ENCODE measurements at regions of chr4 and their contacts with region 1.

Region 1: DNA sequence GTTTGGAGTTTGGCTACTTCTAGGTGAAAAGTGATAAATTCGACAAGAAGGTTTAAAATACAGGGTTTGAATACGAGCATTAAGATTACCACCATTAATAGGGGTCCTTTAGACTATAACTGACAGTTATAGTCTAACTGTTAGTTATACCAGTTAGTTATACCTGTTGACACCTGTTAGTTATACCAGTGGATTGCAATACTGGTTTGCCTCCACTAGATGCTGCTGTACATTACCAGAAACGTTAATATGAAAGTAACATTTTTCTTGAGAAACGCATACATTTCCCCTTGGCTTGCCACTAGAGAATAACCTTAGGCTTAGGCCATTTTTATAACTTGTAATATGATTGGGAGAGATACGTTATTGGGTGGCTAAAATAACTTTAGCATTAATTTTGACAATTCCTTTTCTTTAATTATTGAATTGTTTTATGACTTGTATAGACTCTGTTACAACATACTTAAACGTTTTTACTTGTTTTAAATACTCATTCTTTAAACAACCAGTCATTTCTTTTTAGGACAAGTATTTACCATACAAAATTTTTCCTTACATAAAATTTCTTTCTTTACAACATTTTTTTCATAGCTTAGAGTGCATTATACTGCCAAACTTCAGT is 911.2 kb downstream of the FSTL5 start:
- DNase-seq: no peak
- H3K4me3 ChIP-seq: no peak overlapping the region
- H3K27ac ChIP-seq: no peak overlapping the region
- H3K4me1 ChIP-seq: no peaks in the 10 kb centered on the region
- H3K27me3 ChIP-seq: no peaks in the 10 kb centered on the region
- CTCF ChIP-seq: peak; percentile 81

Region 2: GRCh38 chr4:159946983-159947615 is 1305.5 kb before region 1 on chr4:
- CTCF ChIA-PET with region 1: no interaction called
- POLR2A ChIA-PET with region 1: no interaction called
- intact Hi-C with region 1: loop called (anchors 10 kb)
- DNase-seq: peak in 1 of 2 experiments; percentile 35
- H3K4me3 ChIP-seq: no peak overlapping the region
- H3K27ac ChIP-seq: no peak overlapping the region
- H3K4me1 ChIP-seq: no peaks in the 10 kb centered on the region
- H3K27me3 ChIP-seq: no peaks in the 10 kb centered on the region
- CTCF ChIP-seq: peak; percentile 77

Region 3: DNA sequence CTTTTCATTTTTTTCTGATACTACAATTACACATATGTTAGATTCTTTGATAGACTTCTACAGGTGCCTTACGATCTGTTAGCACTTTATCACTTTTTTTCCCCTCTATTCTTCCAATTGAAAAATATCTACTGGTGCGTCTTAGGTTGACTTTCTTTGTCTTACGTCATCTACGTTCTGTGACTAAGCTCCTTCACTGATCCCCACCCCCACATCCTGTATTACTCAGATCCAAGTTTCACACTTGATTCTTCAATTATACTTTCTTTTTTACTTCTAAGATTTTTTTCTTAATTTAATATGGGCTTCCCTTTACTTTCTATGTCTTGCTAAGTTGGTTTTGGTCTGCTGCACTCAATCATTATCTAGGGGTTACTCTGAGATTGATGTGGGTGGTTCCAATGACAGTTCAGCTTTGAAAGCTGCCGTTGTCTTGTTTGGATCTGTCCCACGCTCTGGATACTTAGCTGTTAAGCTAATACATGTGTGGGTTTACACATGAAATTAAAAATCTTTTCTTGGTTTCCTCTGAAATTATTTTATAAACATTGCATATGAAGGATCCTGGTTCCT is 828.7 kb before region 1 on chr4:
- CTCF ChIA-PET with region 1: no interaction called
- POLR2A ChIA-PET with region 1: no interaction called
- intact Hi-C with region 1: no loop called
- DNase-seq: no peak
- H3K4me3 ChIP-seq: no peak overlapping the region
- H3K27ac ChIP-seq: no peak overlapping the region
- H3K4me1 ChIP-seq: no peaks in the 10 kb centered on the region
- H3K27me3 ChIP-seq: no peaks in the 10 kb centered on the region
- CTCF ChIP-seq: no peak

Region 4: GRCh38 chr4:161680146-161680545 is 427.5 kb after region 1 on chr4:
- CTCF ChIA-PET with region 1: no interaction called
- POLR2A ChIA-PET with region 1: no interaction called
- intact Hi-C with region 1: no loop called
- DNase-seq: no peak
- H3K4me3 ChIP-seq: no peak overlapping the region
- H3K27ac ChIP-seq: no peak overlapping the region
- H3K4me1 ChIP-seq: no peaks in the 10 kb centered on the region
- H3K27me3 ChIP-seq: no peaks in the 10 kb centered on the region
- CTCF ChIP-seq: no peak

Region 5: DNA sequence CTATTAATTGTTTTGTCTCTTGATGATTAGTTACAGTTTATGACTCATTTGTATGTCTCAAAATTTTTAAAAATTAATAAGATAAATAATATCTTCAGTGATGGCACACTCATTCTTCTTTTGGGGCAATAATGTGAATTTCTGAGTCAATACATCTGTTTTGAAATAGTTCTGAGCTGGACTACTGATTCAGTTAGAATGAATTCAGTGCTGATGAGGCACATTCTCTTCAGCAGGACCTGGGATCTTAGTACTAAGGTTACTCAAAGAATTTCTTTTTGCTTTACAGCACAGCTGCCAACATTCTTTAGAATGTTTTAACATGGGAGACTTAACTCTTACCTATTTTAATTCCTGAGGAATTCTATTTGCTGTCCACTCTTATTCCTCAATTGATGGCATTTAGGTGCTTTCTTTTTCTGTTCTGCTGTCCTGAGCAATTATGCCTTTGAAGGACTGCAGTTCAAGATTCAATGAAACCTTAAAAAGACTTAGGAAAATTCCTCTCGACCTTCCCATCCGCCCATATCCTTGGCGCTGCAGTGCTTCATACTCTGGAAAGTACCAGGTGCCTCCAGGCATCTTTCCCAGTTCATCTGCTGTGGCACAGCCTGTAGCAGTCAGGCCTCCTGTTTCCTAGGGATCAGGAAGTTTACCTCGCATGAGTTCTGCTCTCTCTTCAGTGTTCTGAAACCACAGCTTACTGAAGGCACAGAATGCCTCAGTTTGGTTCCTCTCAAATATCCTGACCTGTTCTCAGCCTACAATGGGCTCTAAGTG is 697.5 kb after region 1 on chr4:
- CTCF ChIA-PET with region 1: no interaction called
- POLR2A ChIA-PET with region 1: no interaction called
- intact Hi-C with region 1: loop called (anchors 10 kb)
- DNase-seq: no peak
- H3K4me3 ChIP-seq: no peak overlapping the region
- H3K27ac ChIP-seq: no peak overlapping the region
- H3K4me1 ChIP-seq: no peaks in the 10 kb centered on the region
- H3K27me3 ChIP-seq: no peaks in the 10 kb centered on the region
- CTCF ChIP-seq: no peak

Region 6: DNA sequence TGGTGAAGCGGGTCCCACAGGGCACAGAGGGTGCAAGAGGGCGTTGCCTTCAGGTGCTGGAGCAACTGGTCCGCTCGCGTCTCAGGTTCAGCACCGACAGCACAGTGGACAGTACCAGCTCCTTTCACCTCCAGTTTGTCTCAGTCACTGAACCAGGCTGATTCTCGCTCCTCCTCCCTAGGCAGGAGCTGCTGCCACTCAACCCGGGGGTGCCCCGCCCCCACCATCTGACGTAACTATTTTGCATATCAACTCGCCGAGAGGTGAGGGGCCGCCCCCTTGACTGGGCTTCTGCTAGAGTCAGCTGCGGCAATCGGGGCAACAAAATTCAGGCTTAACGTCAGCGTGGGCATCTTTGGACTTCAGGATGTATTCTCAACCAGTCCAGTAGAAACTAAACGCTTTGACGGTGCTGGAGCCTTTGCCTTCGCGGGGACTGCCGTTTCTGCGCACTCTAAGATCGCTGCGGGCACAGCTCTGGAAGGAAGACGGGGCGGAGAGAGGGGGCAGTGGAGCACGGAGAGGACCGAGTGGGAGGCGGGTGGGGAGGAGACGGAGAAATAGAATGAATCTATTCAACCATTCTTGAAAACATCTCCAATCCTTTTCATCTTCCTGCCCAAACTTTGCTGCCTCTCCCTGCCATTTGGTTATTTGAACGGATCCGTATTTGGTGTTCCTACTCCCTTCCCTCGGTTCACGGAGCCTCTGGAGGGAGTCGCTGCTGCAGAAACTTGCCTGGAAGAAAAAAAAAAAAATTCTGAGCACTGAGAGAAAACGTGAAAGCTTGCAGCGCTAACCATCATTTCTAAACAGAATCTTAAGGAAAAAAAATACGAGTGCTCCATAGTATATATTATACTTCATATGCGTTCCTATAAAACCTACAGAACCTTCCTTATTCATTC is 911.5 kb after region 1 on chr4 and contains the start of gene FSTL5:
- CTCF ChIA-PET with region 1: no interaction called
- POLR2A ChIA-PET with region 1: no interaction called
- intact Hi-C with region 1: loop called (anchors 2 kb)
- DNase-seq: peak; percentile 53 to 79
- H3K4me3 ChIP-seq: peak within 1 kb of the TSS; percentile 63
- H3K27ac ChIP-seq: no peak within 1 kb of the TSS
- H3K4me1 ChIP-seq: peaks cover 10% of the 10 kb centered on the region; the same call in 1 of the 2 replicates
- H3K27me3 ChIP-seq: no peaks in the 10 kb centered on the region
- CTCF ChIP-seq: no peak
- total RNA-seq, gene FSTL5: 23.0 and 29.4 TPM in 2 replicates

Region 7: GRCh38 chr4:162461952-162462351 is 1209.3 kb after region 1 on chr4:
- CTCF ChIA-PET with region 1: no interaction called
- POLR2A ChIA-PET with region 1: no interaction called
- intact Hi-C with region 1: loop called (anchors 10 kb)
- DNase-seq: no peak
- H3K4me3 ChIP-seq: no peak overlapping the region
- H3K27ac ChIP-seq: no peak overlapping the region
- H3K4me1 ChIP-seq: no peaks in the 10 kb centered on the region
- H3K27me3 ChIP-seq: no peaks in the 10 kb centered on the region
- CTCF ChIP-seq: peak; percentile 46